ENCODE measurements at regions of chr15 and their contacts with region 1.

Region 1: GRCh38 chr15:94163999-94164807 is 67.2 kb upstream of the MCTP2 start:
- DNase-seq: peak; percentile 31 to 82
- H3K4me3 ChIP-seq: no peak overlapping the region
- H3K27ac ChIP-seq: no peak overlapping the region
- H3K4me1 ChIP-seq: no peaks in the 10 kb centered on the region
- H3K27me3 ChIP-seq: no peaks in the 10 kb centered on the region
- CTCF ChIP-seq: peak; percentile 35 to 88 (median 80)
- EP300 ChIP-seq: no peak
- POLR2A ChIP-seq: no peak
- RAD21 ChIP-seq: peak; percentile 95

Region 2: GRCh38 chr15:94174399-94174802 is 10.2 kb after region 1 on chr15:
- CTCF ChIA-PET with region 1: interaction called, 22 read pairs
- POLR2A ChIA-PET with region 1: no interaction called
- DNase-seq: no peak
- H3K4me3 ChIP-seq: no peak overlapping the region
- H3K27ac ChIP-seq: no peak overlapping the region
- H3K4me1 ChIP-seq: no peaks in the 10 kb centered on the region
- H3K27me3 ChIP-seq: no peaks in the 10 kb centered on the region
- CTCF ChIP-seq: no peak
- EP300 ChIP-seq: no peak
- POLR2A ChIP-seq: no peak
- RAD21 ChIP-seq: no peak

Region 3: DNA sequence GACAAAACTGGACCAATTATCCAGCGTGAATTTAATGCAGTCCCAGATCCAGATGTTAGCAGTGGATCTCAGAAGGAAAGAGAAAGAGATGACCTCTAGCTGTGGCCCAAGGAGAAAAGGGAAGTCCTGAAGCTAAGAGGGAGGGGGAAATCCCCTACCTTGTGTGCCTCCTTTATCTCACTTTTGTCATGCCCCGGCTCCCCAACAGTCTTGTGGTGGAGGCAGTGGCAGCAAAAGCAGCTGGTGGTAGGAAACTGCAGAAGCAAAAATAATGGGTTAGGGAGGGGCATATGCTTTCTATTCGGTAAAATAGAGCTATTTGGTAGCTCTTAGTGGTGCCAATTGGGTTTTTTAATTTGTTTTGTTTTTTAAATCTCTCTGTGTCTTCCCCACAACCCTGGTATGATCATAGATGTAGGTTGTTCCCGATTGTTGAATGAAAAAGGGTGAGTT is 123.6 kb after region 1 on chr15:
- CTCF ChIA-PET with region 1: no interaction called
- POLR2A ChIA-PET with region 1: no interaction called
- DNase-seq: no peak
- H3K4me3 ChIP-seq: no peak overlapping the region
- H3K27ac ChIP-seq: no peak overlapping the region
- H3K4me1 ChIP-seq: peaks cover 2 to 9% (median 4%) of the 10 kb centered on the region in 4 experiments
- H3K27me3 ChIP-seq: no peaks in the 10 kb centered on the region
- CTCF ChIP-seq: no peak
- EP300 ChIP-seq: no peak
- POLR2A ChIP-seq: no peak
- RAD21 ChIP-seq: no peak

Region 4: GRCh38 chr15:94317201-94317600 is 153.0 kb after region 1 on chr15:
- CTCF ChIA-PET with region 1: interaction called, 194 read pairs
- POLR2A ChIA-PET with region 1: no interaction called
- DNase-seq: no peak
- H3K4me3 ChIP-seq: no peak overlapping the region
- H3K27ac ChIP-seq: no peak overlapping the region
- H3K4me1 ChIP-seq: peaks cover 0 to 4% (median 0%) of the 10 kb centered on the region in 4 experiments; a peak in 4 of 7 replicates
- H3K27me3 ChIP-seq: no peaks in the 10 kb centered on the region
- CTCF ChIP-seq: no peak
- EP300 ChIP-seq: no peak
- POLR2A ChIP-seq: no peak
- RAD21 ChIP-seq: no peak

Region 5: DNA sequence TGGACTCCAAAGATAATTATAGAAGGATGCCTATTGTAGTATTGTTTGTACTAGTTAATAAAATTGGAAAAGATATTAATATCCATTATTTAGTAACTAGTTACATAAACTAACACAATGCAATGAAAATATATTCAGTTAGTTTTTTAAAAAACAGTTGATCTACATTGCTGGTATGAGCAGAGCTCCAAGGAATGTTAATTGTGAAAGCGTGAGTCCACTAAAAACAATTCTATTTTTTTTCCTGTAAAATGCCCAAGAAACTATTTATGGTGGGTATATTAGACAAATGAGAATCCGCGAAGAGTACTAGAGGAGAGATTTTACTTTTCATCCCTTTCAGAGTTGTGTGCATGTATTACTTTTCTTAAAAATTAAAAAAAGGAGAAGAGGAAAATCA is 171.4 kb after region 1 on chr15:
- CTCF ChIA-PET with region 1: interaction called, 10 read pairs
- POLR2A ChIA-PET with region 1: no interaction called
- DNase-seq: no peak
- H3K4me3 ChIP-seq: no peak overlapping the region
- H3K27ac ChIP-seq: no peak overlapping the region
- H3K4me1 ChIP-seq: no peaks in the 10 kb centered on the region
- H3K27me3 ChIP-seq: no peaks in the 10 kb centered on the region
- CTCF ChIP-seq: no peak
- EP300 ChIP-seq: no peak
- POLR2A ChIP-seq: no peak
- RAD21 ChIP-seq: no peak